ENCODE measurements at regions of chr4 and their contacts with region 1.

Region 1: GRCh38 chr4:115165503-115165902 is 52.1 kb upstream of the NDST4 start:
- DNase-seq: no peak
- H3K4me3 Mint-ChIP-seq: no peak overlapping the region
- H3K27ac Mint-ChIP-seq: no peak overlapping the region
- H3K4me1 Mint-ChIP-seq: no peaks in the 10 kb centered on the region
- H3K27me3 Mint-ChIP-seq: no peaks in the 10 kb centered on the region
- CTCF ChIP-seq: no peak

Region 2: GRCh38 chr4:114945616-114946015 is 219.9 kb before region 1 on chr4:
- CTCF ChIA-PET with region 1: no interaction called
- intact Hi-C with region 1: no loop called
- DNase-seq: no peak
- H3K4me3 Mint-ChIP-seq: no peak overlapping the region
- H3K27ac Mint-ChIP-seq: no peak overlapping the region
- H3K4me1 Mint-ChIP-seq: no peaks in the 10 kb centered on the region
- H3K27me3 Mint-ChIP-seq: no peaks in the 10 kb centered on the region
- CTCF ChIP-seq: no peak

Region 3: DNA sequence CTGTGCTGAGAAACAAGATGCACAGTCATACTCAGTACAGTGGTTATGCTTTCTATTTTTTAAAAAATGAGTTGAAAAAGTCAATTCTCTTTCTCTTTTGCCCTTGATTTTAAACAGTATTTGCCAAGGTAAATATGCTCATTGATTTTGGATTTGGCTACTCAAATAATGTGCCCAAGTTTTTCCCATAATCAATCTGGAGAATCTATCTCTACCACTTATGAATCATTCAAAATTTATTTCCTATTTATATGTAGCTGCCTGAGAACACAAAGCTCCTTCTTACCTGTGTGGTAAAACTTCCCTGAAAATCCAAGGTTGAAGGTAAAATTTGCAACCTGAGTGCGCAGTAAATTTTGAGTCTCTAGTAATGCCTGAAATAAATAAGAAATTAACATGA is 188.6 kb before region 1 on chr4:
- CTCF ChIA-PET with region 1: no interaction called
- intact Hi-C with region 1: no loop called
- DNase-seq: no peak
- H3K4me3 Mint-ChIP-seq: no peak overlapping the region
- H3K27ac Mint-ChIP-seq: no peak overlapping the region
- H3K4me1 Mint-ChIP-seq: no peaks in the 10 kb centered on the region
- H3K27me3 Mint-ChIP-seq: no peaks in the 10 kb centered on the region
- CTCF ChIP-seq: no peak

Region 4: GRCh38 chr4:115219315-115219860 is 53.9 kb after region 1 on chr4:
- CTCF ChIA-PET with region 1: no interaction called
- intact Hi-C with region 1: loop called (anchors 10 kb)
- DNase-seq: no peak
- H3K4me3 Mint-ChIP-seq: no peak overlapping the region
- H3K27ac Mint-ChIP-seq: no peak overlapping the region
- H3K4me1 Mint-ChIP-seq: no peaks in the 10 kb centered on the region
- H3K27me3 Mint-ChIP-seq: no peaks in the 10 kb centered on the region
- CTCF ChIP-seq: no peak

Region 5: DNA sequence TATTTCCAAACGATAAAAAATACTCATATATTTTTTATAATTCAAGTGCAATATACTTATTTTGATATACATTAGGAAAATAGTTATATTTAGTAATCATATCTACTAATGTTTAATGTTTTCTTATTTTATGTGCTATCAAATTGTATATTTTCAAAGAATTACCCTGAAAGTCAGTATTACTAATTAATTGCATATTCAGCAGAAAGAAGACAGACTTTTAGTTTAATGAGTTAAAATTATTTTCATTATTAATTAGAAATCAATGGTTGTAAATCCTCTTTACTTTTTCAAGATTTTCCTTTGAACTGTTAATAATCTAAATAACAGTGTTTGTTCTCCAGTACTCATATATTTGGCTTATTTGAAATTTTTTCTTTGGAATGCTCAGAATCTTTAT is 129.2 kb after region 1 on chr4:
- CTCF ChIA-PET with region 1: no interaction called
- intact Hi-C with region 1: no loop called
- DNase-seq: no peak
- H3K4me3 Mint-ChIP-seq: no peak overlapping the region
- H3K27ac Mint-ChIP-seq: no peak overlapping the region
- H3K4me1 Mint-ChIP-seq: no peaks in the 10 kb centered on the region
- H3K27me3 Mint-ChIP-seq: no peaks in the 10 kb centered on the region
- CTCF ChIP-seq: no peak